ENCODE measurements at regions of chr6 and their contacts with region 1.

Region 1: DNA sequence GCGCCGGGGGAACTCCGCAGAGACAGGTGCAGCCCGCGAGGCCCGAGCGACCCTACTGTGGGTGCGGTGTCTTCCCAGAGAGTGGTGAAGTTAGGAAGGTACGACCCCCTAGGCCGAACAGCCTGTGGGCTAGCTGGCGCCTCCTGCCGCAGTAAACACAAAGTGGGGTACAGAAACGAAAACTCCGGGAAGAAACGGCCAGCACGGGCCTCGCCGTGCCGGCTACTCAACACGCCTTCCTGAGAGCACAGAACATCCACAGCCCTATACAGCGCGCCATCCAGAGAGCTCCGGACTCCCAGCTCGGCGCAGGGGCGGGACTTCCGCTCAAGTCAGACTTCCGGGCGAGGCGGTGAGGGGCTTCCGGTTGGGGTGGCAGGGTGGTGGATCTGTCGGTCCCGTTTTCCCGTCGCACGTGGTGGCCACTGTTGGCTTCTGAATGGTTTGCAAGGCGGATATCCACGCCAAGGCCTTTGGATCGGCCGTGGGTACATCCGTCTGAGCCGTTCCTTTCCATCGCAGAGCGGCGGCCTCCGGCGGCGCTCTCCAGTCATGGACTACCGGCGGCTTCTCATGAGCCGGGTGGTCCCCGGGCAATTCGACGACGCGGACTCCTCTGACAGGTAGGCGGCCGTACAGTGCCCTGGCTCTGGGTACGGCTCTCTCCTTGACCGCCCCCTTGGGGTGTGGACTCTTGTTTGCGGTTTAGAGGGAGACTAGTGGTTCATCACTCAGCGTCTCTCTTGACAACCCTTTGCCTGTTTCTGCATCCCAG is at the starts of genes CAGE1 and RIOK1:
- DNase-seq: peak; percentile 97
- ATAC-seq: peak; percentile 96
- H3K4me3 Mint-ChIP-seq: peak within 1 kb of the TSS; percentile 89
- H3K27ac Mint-ChIP-seq: peak within 1 kb of the TSS; percentile 98
- H3K4me1 Mint-ChIP-seq: peaks cover 40% of the 10 kb centered on the region
- H3K27me3 Mint-ChIP-seq: no peaks in the 10 kb centered on the region
- CTCF ChIP-seq: no peak
- total RNA-seq, gene CAGE1: 0.11 to 0.18 TPM
- total RNA-seq, gene RIOK1: 46.8 to 50.0 TPM

Region 2: GRCh38 chr6:6686748-6687601 is 702.7 kb before region 1 on chr6:
- CTCF ChIA-PET with region 1: no interaction called
- POLR2A ChIA-PET with region 1: no interaction called
- intact Hi-C with region 1: no loop called
- DNase-seq: peak; percentile 13
- ATAC-seq: no peak
- H3K4me3 Mint-ChIP-seq: no peak overlapping the region
- H3K27ac Mint-ChIP-seq: no peak overlapping the region
- H3K4me1 Mint-ChIP-seq: peaks cover 35% of the 10 kb centered on the region
- H3K27me3 Mint-ChIP-seq: peaks cover 4% of the 10 kb centered on the region
- CTCF ChIP-seq: no peak

Region 3: GRCh38 chr6:7312616-7313504 is 76.8 kb before region 1 on chr6 and contains the start of gene SSR1:
- CTCF ChIA-PET with region 1: interaction called, 10 read pairs
- POLR2A ChIA-PET with region 1: interaction called, 22 read pairs
- intact Hi-C with region 1: loop called (anchors 10 kb)
- DNase-seq: peak; percentile 97
- ATAC-seq: peak; percentile 98
- H3K4me3 Mint-ChIP-seq: peak within 1 kb of the TSS; percentile 94
- H3K27ac Mint-ChIP-seq: peak within 1 kb of the TSS; percentile 92
- H3K4me1 Mint-ChIP-seq: peaks cover 45% of the 10 kb centered on the region
- H3K27me3 Mint-ChIP-seq: no peaks in the 10 kb centered on the region
- CTCF ChIP-seq: no peak
- total RNA-seq, gene SSR1: 117 to 124 TPM